ENCODE measurements at regions of chr9 and their contacts with region 1.

Region 1: DNA sequence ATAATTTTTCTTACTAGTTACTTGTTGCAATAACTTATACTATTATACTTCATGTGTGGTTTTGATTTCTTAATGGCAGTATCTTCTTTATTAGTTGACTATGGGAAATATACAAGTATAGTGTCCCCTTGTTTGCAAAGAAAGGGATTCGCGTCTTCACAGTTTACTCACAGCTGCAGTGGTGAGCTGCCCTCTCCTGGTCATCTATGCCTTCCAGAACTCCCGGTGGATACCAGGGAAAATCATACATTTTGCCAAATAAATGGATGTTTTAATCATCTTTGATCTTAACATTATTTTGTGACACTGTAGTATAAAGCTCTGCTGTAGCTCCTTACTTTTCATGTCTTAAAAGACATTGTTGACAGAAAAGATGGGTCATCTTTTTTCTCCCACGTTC is 142.0 kb downstream of the ZCCHC7 start:
- DNase-seq: no peak
- ATAC-seq: no peak

Region 2: DNA sequence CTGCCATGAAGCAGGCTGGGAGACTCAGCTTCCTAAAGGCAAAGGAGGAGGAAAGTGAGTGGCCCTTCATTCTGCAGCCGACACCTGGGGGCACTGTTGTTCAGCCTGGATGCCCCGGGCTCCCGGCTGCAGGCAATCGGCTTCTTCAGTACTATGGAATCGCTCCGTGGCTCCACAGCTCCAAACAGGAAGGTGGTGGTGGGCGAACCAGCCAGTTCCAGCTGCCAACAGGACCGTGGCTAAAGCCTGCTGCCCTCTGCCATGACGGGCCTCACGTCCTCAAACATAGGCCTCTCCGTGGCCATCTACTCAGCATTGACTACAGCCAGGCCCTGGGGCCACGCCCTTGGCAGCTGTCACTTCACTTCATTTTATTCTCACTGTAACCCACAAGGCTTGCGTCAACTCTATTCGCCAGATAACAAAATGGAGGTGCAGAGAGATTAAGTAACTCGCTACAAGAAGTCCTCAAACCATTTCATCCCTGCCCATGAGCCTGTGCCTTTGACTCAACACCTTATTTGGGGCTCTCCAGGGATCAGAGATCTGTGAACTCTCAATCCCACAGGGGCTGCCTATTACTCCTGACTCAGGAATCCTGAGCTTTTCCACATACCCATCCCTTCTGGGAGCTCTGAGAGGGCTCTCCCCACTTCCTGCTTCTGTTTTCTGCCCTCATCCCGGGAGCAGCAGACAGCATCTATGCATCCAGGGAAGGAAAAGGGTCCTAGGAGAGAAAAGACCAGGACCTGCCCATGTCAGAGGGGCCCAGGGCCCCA is 266.3 kb before region 1 on chr9:
- intact Hi-C with region 1: loop called in 1 of 2 experiments (anchors 10 kb)
- DNase-seq: peak; percentile 47
- ATAC-seq: peak; percentile 42 to 80